ENCODE measurements at regions of chr21 and their contacts with region 1.

Region 1: GRCh38 chr21:25607151-25608043 is at the start of gene MRPL39:
- DNase-seq: peak; percentile 53
- H3K4me3 ChIP-seq: peak within 1 kb of the TSS; percentile 82
- CTCF ChIP-seq: peak; percentile 91

Region 2: DNA sequence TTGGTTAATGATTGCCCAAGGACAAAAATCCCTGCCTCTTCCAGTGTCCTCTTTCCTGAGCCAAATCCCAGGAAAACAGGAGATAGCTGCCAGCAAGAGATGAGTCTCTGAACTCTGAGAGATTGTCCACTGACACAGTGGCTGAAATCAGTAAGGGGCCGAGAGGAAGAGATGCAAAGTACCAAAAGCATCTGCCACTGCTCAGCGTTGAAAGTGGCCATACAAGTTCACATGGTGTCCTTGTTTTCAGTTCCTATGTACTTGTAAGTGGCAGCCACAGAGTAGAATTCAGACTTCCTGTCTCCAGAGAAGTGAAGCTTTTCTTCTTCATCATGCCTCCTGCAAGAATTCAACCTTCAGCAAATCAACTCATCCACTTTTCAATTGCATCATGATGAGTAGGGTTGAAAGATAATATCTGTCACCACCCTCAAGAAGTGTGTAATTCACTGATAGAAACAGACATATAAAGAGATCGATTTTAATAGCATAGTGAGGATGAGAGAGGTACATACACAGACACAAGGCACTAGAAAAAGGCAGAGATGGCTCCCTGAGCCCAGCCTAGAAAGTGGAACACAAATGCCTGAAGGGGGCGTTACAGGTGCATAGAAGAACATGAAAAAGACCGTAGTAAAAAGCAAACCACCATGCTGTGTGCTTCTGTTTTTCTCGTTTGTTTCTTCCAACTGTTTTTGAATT is 185.9 kb before region 1 on chr21:
- CTCF ChIA-PET with region 1: interaction called, 13 read pairs
- POLR2A ChIA-PET with region 1: no interaction called
- DNase-seq: no peak
- H3K4me3 ChIP-seq: no peak overlapping the region
- CTCF ChIP-seq: peak; percentile 56

Region 3: DNA sequence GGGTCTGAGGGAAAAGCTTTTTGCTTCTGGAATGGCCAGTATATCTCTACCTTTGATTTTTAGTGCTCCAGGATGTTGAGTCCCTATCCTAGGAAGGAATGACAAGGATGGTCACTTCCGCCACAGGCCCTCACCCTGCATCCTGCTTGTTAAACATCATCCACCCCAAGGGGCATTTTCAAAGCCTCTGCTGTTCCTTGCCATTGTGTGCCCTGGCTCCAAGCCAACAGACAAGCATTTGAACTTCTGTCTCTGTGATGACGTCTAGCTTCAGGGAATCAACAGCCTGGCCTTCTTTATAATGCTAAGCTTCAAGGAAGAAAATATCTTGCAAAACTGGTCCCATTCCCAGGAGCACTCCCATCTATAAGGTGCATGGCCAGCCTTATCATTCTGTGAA is 19.4 kb after region 1 on chr21:
- CTCF ChIA-PET with region 1: interaction called, 26 read pairs
- POLR2A ChIA-PET with region 1: no interaction called
- DNase-seq: no peak
- H3K4me3 ChIP-seq: no peak overlapping the region
- CTCF ChIP-seq: no peak

Region 4: DNA sequence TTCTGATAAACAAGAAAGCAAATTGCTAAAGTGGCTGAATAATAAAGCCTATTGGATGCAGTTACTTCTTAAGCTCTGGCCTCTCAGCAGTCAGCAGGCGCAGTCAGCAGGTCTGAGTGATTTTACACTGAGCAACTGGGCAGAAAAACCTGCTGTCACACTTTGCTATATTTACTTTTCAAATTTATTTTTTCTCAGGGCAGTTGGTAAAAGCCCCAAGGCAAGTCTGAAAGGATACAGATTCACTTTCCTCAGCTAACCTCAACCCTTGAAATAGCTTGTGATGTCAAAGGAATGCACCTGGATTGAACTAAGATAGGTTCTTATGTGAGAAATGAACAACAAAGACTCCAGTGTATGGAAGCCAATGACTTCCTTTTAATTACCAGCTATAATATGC is 93.3 kb after region 1 on chr21:
- CTCF ChIA-PET with region 1: interaction called, 78 read pairs
- POLR2A ChIA-PET with region 1: no interaction called
- DNase-seq: no peak
- H3K4me3 ChIP-seq: no peak overlapping the region
- CTCF ChIP-seq: no peak

Region 5: DNA sequence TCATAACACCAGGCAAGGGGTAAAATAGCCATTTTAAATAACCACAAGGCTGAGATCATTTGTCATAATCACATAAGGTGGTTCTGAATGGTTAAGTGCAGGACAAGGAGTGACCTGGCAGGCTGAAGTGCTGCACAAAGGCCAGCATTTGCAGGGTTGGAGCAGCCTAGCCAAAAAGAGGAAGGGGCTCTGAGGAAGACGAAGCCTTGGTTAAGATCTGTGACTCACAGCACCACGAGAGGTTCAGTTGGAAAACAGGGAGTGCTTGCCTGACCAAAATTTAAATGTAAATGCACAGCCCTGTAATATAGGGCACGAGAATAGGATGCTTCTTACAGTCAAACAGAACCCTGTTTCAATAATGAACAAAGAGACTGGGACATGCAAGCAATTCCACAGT is 115.2 kb after region 1 on chr21:
- CTCF ChIA-PET with region 1: interaction called, 39 read pairs
- POLR2A ChIA-PET with region 1: no interaction called
- DNase-seq: no peak
- H3K4me3 ChIP-seq: no peak overlapping the region
- CTCF ChIP-seq: no peak

Region 6: GRCh38 chr21:25801217-25802014 is 194.0 kb after region 1 on chr21:
- CTCF ChIA-PET with region 1: interaction called, 10 read pairs
- POLR2A ChIA-PET with region 1: no interaction called
- DNase-seq: no peak
- H3K4me3 ChIP-seq: no peak overlapping the region
- CTCF ChIP-seq: peak; percentile 94

Measured in AG04449 (cell line).